ENCODE measurements at regions of chr2 and their contacts with region 1.

Region 1: GRCh38 chr2:70301344-70302194 is at the start of gene FAM136A:
- DNase-seq: peak; percentile 61 to 98
- H3K4me3 ChIP-seq: peak within 1 kb of the TSS; percentile 63 to 86 (median 75)
- H3K27ac ChIP-seq: peak within 1 kb of the TSS; percentile 87
- H3K4me1 ChIP-seq: peaks cover 0 to 8% (median 5%) of the 10 kb centered on the region in 4 experiments; a peak in 3 of 7 replicates
- H3K27me3 ChIP-seq: no peaks in the 10 kb centered on the region
- CTCF ChIP-seq: peak; percentile 86 to 97 (median 91)
- EP300 ChIP-seq: peak in 1 of 2 experiments; percentile 50; a peak in 1 of 3 replicates
- POLR2A ChIP-seq: peak; percentile 86 to 95
- RAD21 ChIP-seq: peak; percentile 34 to 55; a peak in 3 of 4 replicates
- total RNA-seq, gene FAM136A: 118 and 122 TPM in 2 replicates

Region 2: DNA sequence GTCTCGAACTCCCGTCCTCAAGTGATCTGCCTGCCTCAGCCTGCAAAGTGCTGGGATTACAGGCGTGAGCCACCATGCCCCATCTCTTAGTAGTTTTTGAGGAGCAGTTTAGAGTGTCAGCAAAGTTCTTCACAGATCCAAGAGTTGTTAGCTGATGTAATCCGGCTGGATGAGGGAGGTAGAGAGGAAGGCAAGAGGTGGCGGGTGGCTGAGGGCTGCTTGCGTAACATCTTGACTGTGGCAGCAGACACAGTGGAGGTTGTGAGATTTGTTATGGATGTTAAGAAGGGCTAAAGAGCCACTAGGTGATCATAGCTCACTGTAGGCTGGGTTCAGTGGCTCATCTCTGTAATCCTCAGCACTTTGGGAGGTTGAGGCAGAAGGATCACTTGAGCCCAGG is 19.8 kb after region 1 on chr2:
- CTCF ChIA-PET with region 1: interaction called, 15 read pairs
- POLR2A ChIA-PET with region 1: interaction called, 4 read pairs
- DNase-seq: no peak
- H3K4me3 ChIP-seq: no peak overlapping the region
- H3K27ac ChIP-seq: no peak overlapping the region
- H3K4me1 ChIP-seq: no peaks in the 10 kb centered on the region
- H3K27me3 ChIP-seq: no peaks in the 10 kb centered on the region
- CTCF ChIP-seq: no peak
- EP300 ChIP-seq: no peak
- POLR2A ChIP-seq: no peak
- RAD21 ChIP-seq: no peak

Region 3: GRCh38 chr2:70553584-70554337 is 252.2 kb after region 1 on chr2 and contains the start of gene TGFA:
- CTCF ChIA-PET with region 1: interaction called, 17 read pairs
- POLR2A ChIA-PET with region 1: no interaction called
- DNase-seq: peak; percentile 66 to 88
- H3K4me3 ChIP-seq: peak within 1 kb of the TSS; percentile 45 to 85 (median 66)
- H3K27ac ChIP-seq: no peak within 1 kb of the TSS
- H3K4me1 ChIP-seq: peaks cover 3 to 6% (median 4%) of the 10 kb centered on the region in 4 experiments; a peak in 5 of 7 replicates
- H3K27me3 ChIP-seq: peaks cover 6 to 45% (median 28%) of the 10 kb centered on the region in 4 experiments
- CTCF ChIP-seq: peak; percentile 83 to 89 (median 85)
- EP300 ChIP-seq: 0 out of 3 replicates have a peak, but pooled peaks of 1 of the 2 experiments have one; percentile 29
- POLR2A ChIP-seq: 0 out of 3 replicates have a peak, but pooled peaks of 1 of the 2 experiments have one; percentile 3
- RAD21 ChIP-seq: peak; percentile 66 to 79; a peak in 3 of 4 replicates
- total RNA-seq, gene TGFA: 2.8 and 3.7 TPM in 2 replicates

Region 4: DNA sequence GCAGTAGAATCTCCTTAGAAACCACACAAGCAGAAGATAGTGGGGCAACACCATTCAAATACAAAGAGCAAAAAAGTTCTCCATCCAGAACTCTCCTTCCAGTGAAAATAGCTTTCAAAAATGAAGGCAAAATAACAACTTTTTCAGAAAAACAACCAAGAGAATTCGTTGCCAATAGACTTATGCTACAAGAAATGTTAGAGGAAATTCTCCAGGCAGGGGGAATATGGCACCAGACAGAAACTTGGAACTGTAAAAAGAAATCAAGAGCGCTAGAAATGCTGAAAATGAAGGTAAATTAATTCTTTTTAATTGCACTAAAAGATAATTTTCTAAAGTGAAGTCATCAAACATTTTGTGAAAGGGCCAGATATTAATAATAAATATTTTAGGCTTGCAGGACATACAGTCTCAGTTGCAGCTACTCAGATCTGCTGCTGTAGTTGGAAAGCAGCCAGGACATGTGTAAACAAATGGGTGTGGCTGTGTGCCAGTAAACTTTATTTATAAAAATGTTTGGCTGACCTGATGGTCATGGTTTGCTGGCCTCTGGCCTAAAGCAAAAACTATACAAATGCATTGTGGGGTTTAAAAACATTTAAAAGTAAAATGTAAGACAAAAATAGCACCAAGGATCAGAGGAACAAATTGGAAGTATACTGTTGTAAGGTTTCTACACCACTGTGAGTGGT is 325.8 kb after region 1 on chr2:
- CTCF ChIA-PET with region 1: interaction called, 11 read pairs
- POLR2A ChIA-PET with region 1: interaction called, 3 read pairs
- DNase-seq: no peak
- H3K4me3 ChIP-seq: no peak overlapping the region
- H3K27ac ChIP-seq: no peak overlapping the region
- H3K4me1 ChIP-seq: peaks cover 4 to 11% (median 5%) of the 10 kb centered on the region in 4 experiments
- H3K27me3 ChIP-seq: no peaks in the 10 kb centered on the region
- CTCF ChIP-seq: no peak
- EP300 ChIP-seq: no peak
- POLR2A ChIP-seq: no peak
- RAD21 ChIP-seq: no peak

Measured in H1 (cell line).